ENCODE measurements at regions of chr19 and their contacts with region 1.

Region 1: DNA sequence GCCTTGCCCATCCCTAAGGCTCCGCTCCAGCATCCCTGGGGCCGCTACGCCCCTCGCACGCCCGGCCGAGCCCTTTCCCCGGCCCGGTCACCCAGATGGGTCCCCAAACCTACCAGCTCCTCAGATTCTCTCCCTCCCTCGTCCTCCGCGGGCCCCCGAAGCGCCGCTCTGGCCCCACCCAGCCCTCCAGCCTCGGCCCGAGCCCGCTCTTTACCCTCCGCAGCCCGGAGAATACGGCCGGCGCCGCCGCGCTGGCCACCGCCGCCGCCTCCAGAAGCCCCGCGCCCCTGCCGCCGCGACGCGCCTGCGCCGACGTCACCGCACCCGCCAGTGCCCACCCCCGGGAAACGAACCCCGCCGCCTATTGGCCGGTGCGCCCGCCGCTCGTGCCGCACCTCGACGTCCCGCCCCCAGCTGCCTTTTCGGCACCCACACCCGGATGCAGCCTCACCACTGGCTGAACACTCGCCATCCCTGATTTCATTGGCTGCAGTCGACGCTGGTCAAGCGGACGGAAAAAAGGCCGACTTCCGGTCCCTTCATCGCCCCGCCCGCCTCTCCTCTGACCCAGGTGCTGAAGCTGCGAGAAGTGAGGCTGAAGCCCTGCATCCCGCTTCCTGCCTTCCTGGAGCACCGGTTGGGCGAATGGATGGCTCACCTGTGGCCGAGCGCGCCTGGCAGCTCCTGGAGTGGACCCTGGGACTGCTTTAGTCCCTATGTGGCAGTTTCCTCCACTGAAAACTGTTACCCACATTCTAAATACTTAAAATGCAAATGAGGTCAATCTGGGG is at the start of gene DAPK3:
- DNase-seq: peak; percentile 99
- ATAC-seq: peak; percentile 94
- H3K4me3 ChIP-seq: peak within 1 kb of the TSS; percentile 71 to 98
- H3K27ac ChIP-seq: peak within 1 kb of the TSS; percentile 92 to 94
- H3K4me1 ChIP-seq: no peaks in the 10 kb centered on the region
- H3K27me3 ChIP-seq: no peaks in the 10 kb centered on the region
- total RNA-seq, gene DAPK3: 118 to 197 TPM

Region 2: GRCh38 chr19:3762501-3763459 is 208.2 kb before region 1 on chr19 and contains the start of gene MRPL54:
- intact Hi-C with region 1: loop called in 1 of 2 experiments (anchors 5 kb)
- DNase-seq: peak; percentile 99 to 100
- ATAC-seq: peak; percentile 96
- H3K4me3 ChIP-seq: peak within 1 kb of the TSS; percentile 64 to 98
- H3K27ac ChIP-seq: peak within 1 kb of the TSS; percentile 73 to 79
- H3K4me1 ChIP-seq: no peaks in the 10 kb centered on the region
- H3K27me3 ChIP-seq: no peaks in the 10 kb centered on the region
- total RNA-seq, gene MRPL54: 39.6 to 40.7 TPM

Region 3: DNA sequence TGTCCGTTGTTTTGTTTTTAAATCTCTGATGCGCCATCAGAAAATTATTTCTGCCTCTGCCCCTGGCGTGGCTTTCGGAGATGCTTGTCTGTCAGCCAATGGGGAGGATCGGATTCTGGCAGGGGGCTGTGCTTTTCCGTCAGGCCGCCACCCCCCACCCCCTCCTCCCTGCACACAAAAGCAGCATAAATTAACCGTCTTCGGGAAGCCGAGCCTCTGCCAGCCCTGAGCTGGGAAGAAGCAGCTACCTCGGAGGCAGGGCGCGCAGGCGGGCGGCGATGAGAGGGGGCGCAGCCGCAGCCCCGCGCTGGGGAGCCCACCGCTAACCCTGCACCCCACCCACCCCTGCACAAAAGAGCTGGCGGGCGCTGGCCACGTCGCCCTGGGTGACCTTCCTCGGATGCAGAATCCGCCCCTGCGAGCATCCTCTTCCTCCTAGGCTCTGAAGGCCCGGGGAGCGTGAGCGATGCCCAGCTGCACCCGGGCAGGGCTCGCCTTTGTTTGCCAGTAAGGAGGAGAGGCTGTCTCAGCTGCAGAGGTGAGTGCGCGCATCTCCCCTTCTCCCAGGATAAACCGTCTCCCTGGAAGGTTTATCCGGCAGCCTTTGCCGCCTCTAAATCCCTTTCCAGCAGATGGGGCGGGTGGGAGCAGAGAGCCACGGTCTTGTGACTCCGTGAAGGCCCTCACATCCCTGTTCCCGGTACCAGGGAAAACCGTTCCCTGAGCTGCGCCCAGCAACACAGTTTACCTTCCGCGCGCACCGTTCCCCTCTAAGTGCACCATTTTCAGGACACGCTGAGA is 90.3 kb before region 1 on chr19 and contains the start of gene ATCAY:
- intact Hi-C with region 1: no loop called
- DNase-seq: no peak
- ATAC-seq: no peak
- H3K4me3 ChIP-seq: no peak within 1 kb of the TSS
- H3K27ac ChIP-seq: no peak within 1 kb of the TSS
- H3K4me1 ChIP-seq: no peaks in the 10 kb centered on the region
- H3K27me3 ChIP-seq: no peaks in the 10 kb centered on the region
- total RNA-seq, gene ATCAY: not detected

Region 4: GRCh38 chr19:4035582-4035981 is 64.6 kb after region 1 on chr19:
- intact Hi-C with region 1: no loop called
- DNase-seq: no peak
- ATAC-seq: no peak
- H3K4me3 ChIP-seq: no peak overlapping the region
- H3K27ac ChIP-seq: no peak overlapping the region
- H3K4me1 ChIP-seq: no peaks in the 10 kb centered on the region
- H3K27me3 ChIP-seq: no peaks in the 10 kb centered on the region

Measured in aorta (tissue), 5 donors.